ENCODE measurements at regions of chr6 and their contacts with region 1.

Region 1: DNA sequence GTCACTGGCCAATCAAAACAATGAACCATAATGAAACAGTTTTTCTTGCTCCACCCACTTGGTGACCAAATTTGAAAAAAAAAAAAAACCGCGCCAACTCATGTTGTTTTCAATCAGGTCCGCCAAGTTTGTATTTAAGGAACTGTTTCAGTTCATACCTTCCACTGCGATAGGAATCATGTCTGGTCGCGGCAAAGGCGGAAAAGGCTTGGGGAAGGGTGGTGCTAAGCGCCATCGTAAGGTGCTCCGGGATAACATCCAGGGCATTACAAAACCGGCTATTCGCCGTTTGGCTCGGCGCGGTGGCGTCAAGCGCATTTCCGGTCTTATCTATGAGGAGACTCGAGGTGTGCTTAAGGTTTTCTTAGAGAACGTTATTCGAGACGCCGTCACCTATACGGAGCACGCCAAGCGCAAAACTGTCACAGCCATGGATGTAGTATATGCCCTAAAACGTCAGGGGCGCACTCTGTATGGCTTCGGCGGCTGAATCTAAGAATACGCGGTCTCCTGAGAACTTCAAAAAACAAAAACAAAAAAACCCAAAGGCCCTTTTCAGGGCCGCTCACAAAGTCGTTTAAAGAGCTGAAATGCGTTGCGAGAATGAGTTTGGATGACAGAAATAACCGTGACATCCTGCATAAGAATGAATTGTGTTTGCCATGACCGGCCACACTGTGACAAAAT is 16.7 kb downstream of the HFE start:
- DNase-seq: peak; percentile 78 to 98 (median 86)
- ATAC-seq: peak; percentile 91
- H3K4me3 ChIP-seq: peak overlapping the region; percentile 30
- H3K27ac ChIP-seq: peak overlapping the region; percentile 92
- H3K4me1 ChIP-seq: peaks cover 3 to 20% of the 10 kb centered on the region in 2 experiments; a peak in 3 of 5 replicates
- H3K27me3 ChIP-seq: no peaks in the 10 kb centered on the region
- CTCF ChIP-seq: peak; percentile 53 to 71 (median 61)
- EP300 ChIP-seq: peak; percentile 96
- POLR2A ChIP-seq: peak; percentile 100
- RAD21 ChIP-seq: peak; percentile 29 to 46; a peak in 3 of 4 replicates

Region 2: GRCh38 chr6:25958700-25959162 is 145.2 kb before region 1 on chr6:
- CTCF ChIA-PET with region 1: no interaction called
- POLR2A ChIA-PET with region 1: no interaction called
- in situ Hi-C with region 1: no loop called
- intact Hi-C with region 1: no loop called
- DNase-seq: peak; percentile 50 to 80 (median 58)
- ATAC-seq: peak; percentile 24
- H3K4me3 ChIP-seq: no peak overlapping the region
- H3K27ac ChIP-seq: no peak overlapping the region
- H3K4me1 ChIP-seq: peaks cover 6 to 19% of the 10 kb centered on the region in 2 experiments; a peak in 4 of 5 replicates
- H3K27me3 ChIP-seq: no peaks in the 10 kb centered on the region
- CTCF ChIP-seq: no peak
- EP300 ChIP-seq: peak; percentile 35; the same call in 1 of the 2 replicates
- POLR2A ChIP-seq: no peak
- RAD21 ChIP-seq: no peak

Region 3: GRCh38 chr6:26054857-26055669 is 48.9 kb before region 1 on chr6:
- CTCF ChIA-PET with region 1: interaction called, 131 read pairs
- POLR2A ChIA-PET with region 1: interaction called, 28 read pairs
- in situ Hi-C with region 1: no loop called
- intact Hi-C with region 1: loop called (anchors 2 kb)
- DNase-seq: peak; percentile 81 to 95 (median 88)
- ATAC-seq: peak; percentile 68
- H3K4me3 ChIP-seq: peak overlapping the region; percentile 60
- H3K27ac ChIP-seq: peak overlapping the region; percentile 94
- H3K4me1 ChIP-seq: peaks cover 7 to 29% of the 10 kb centered on the region in 2 experiments
- H3K27me3 ChIP-seq: no peaks in the 10 kb centered on the region
- CTCF ChIP-seq: peak; percentile 24 to 42 (median 29); a peak in 3 of 6 replicates
- EP300 ChIP-seq: peak; percentile 34
- POLR2A ChIP-seq: peak; percentile 95
- RAD21 ChIP-seq: peak in 1 of 2 experiments; percentile 59; a peak in 2 of 4 replicates

Region 4: GRCh38 chr6:26065952-26066380 is 37.9 kb before region 1 on chr6:
- CTCF ChIA-PET with region 1: interaction called, 131 read pairs
- POLR2A ChIA-PET with region 1: interaction called, 19 read pairs
- in situ Hi-C with region 1: loop called (anchors 5 kb)
- intact Hi-C with region 1: no loop called
- DNase-seq: peak; percentile 80 to 91 (median 84)
- ATAC-seq: peak; percentile 91
- H3K4me3 ChIP-seq: no peak overlapping the region
- H3K27ac ChIP-seq: peak overlapping the region; percentile 70
- H3K4me1 ChIP-seq: peaks cover under 1 to 6% of the 10 kb centered on the region in 2 experiments; a peak in 2 of 5 replicates
- H3K27me3 ChIP-seq: no peaks in the 10 kb centered on the region
- CTCF ChIP-seq: peak; percentile 89 to 98 (median 93)
- EP300 ChIP-seq: peak; percentile 32; the same call in 1 of the 2 replicates
- POLR2A ChIP-seq: no peak
- RAD21 ChIP-seq: peak; percentile 99

Region 5: DNA sequence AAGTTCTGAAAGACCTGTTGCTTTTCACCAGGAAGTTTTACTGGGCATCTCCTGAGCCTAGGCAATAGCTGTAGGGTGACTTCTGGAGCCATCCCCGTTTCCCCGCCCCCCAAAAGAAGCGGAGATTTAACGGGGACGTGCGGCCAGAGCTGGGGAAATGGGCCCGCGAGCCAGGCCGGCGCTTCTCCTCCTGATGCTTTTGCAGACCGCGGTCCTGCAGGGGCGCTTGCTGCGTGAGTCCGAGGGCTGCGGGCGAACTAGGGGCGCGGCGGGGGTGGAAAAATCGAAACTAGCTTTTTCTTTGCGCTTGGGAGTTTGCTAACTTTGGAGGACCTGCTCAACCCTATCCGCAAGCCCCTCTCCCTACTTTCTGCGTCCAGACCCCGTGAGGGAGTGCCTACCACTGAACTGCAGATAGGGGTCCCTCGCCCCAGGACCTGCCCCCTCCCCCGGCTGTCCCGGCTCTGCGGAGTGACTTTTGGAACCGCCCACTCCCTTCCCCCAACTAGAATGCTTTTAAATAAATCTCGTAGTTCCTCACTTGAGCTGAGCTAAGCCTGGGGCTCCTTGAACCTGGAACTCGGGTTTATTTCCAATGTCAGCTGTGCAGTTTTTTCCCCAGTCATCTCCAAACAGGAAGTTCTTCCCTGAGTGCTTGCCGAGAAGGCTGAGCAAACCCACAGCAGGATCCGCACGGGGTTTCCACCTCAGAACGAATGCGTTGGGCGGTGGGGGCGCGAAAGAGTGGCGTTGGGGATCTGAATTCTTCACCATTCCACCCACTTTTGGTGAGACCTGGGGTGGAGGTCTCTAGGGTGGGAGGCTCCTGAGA is 16.4 kb before region 1 on chr6 and contains the start of gene HFE:
- CTCF ChIA-PET with region 1: no interaction called
- POLR2A ChIA-PET with region 1: interaction called, 48 read pairs
- in situ Hi-C with region 1: no loop called
- intact Hi-C with region 1: no loop called
- DNase-seq: peak; percentile 59 to 75 (median 66)
- ATAC-seq: peak; percentile 92
- H3K4me3 ChIP-seq: peak within 1 kb of the TSS; percentile 56
- H3K27ac ChIP-seq: peak within 1 kb of the TSS; percentile 67
- H3K4me1 ChIP-seq: peaks cover 9% of the 10 kb centered on the region in 2 experiments; a peak in 4 of 5 replicates
- H3K27me3 ChIP-seq: no peaks in the 10 kb centered on the region
- CTCF ChIP-seq: peak in 1 of 3 experiments; percentile 2; a peak in 1 of 6 replicates
- EP300 ChIP-seq: no peak
- POLR2A ChIP-seq: peak; percentile 56; the same call in 1 of the 2 replicates
- RAD21 ChIP-seq: 0 out of 4 replicates have a peak, but pooled peaks of 1 of the 2 experiments have one; percentile 1
- polyA plus RNA-seq, gene HFE: 0.17 to 0.31 TPM

Region 6: GRCh38 chr6:26115226-26115625 is 11.3 kb after region 1 on chr6:
- CTCF ChIA-PET with region 1: no interaction called
- POLR2A ChIA-PET with region 1: interaction called, 20 read pairs
- in situ Hi-C with region 1: no loop called
- intact Hi-C with region 1: no loop called
- DNase-seq: no peak
- ATAC-seq: no peak
- H3K4me3 ChIP-seq: no peak overlapping the region
- H3K27ac ChIP-seq: no peak overlapping the region
- H3K4me1 ChIP-seq: peaks cover 0 to 8% of the 10 kb centered on the region in 2 experiments; a peak in 2 of 5 replicates
- H3K27me3 ChIP-seq: no peaks in the 10 kb centered on the region
- CTCF ChIP-seq: no peak
- EP300 ChIP-seq: no peak
- POLR2A ChIP-seq: 0 out of 2 replicates have a peak, but pooled peaks have one; percentile 19
- RAD21 ChIP-seq: no peak

Region 7: DNA sequence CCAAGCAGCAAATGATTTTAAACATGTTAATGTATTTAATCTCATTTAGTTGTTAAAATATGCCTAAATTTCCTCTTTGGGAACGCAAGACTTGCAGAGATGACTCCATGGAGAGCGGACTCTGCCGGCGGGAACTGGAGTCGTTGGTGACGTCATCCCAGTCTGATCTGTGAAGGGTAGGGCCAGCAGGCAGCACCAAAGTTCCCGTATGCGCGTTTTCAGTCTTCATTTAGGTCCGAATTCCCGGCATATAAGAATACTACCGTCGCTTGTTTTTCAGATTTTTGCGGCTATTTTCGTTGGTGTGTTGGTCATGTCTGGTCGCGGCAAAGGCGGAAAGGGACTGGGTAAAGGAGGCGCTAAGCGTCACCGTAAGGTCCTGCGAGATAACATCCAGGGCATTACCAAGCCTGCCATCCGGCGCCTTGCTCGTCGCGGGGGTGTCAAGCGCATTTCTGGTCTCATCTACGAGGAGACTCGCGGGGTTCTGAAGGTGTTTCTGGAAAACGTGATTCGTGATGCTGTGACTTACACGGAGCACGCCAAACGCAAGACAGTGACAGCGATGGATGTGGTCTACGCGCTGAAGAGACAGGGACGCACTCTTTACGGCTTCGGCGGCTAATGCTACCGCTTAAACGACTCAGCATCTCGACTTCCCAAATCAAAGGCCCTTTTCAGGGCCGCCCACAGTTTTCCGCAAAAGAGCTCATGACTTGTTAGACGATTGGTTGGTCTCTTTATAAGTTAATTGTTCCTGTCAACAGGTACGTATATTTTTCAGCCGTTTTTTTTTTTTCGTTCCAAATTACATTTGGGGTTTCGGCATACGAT is 100.6 kb after region 1 on chr6:
- CTCF ChIA-PET with region 1: no interaction called
- POLR2A ChIA-PET with region 1: interaction called, 48 read pairs
- in situ Hi-C with region 1: no loop called
- intact Hi-C with region 1: loop called (anchors 2 kb)
- DNase-seq: peak; percentile 85 to 99 (median 92)
- ATAC-seq: peak; percentile 67
- H3K4me3 ChIP-seq: peak overlapping the region; percentile 57
- H3K27ac ChIP-seq: peak overlapping the region; percentile 99
- H3K4me1 ChIP-seq: peaks cover 9 to 21% of the 10 kb centered on the region in 2 experiments; a peak in 4 of 5 replicates
- H3K27me3 ChIP-seq: no peaks in the 10 kb centered on the region
- CTCF ChIP-seq: peak in 2 of 3 experiments; percentile 67 to 70; a peak in 5 of 6 replicates
- EP300 ChIP-seq: peak; percentile 95
- POLR2A ChIP-seq: peak; percentile 100
- RAD21 ChIP-seq: peak in 1 of 2 experiments; percentile 29; a peak in 2 of 4 replicates

Measured in K562 (cell line).